Calu3 (cell line): ENCODE measurements at regions of chr12 and their contacts with region 1.

Region 1: GRCh38 chr12:82931349-82932114 is 244.8 kb downstream of the TMTC2 start:
- DNase-seq: no peak
- H3K4me3 Mint-ChIP-seq: no peak overlapping the region
- H3K27ac Mint-ChIP-seq: no peak overlapping the region
- H3K4me1 Mint-ChIP-seq: peaks cover 10% of the 10 kb centered on the region
- H3K27me3 Mint-ChIP-seq: no peaks in the 10 kb centered on the region
- CTCF ChIP-seq: no peak

Region 2: DNA sequence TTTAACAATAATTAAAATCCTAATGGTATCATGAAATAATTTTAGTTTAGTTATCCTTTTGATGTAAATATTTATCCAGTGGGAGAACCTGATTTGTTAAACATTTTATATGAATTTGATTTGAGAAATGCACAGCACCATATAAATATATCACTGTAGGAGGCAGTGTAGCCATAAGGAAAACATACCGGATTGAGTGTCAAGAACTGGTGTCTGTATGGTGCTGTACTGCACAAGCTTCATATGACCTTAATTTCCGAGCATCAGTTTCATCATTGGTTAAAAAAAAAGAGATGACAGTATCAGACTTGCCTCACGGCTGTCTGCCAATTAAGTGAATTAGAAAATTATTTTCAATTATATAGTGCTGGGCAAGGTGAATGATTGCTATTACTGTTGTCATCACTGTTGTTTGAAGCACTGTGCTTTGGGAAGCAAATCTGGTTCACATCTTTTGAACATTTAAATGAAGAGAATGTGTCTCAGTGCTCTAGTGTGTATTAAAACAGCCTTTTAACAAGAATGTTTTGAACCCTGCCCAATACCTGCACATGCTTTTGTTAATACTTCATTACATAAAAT is 172.7 kb before region 1 on chr12:
- CTCF ChIA-PET with region 1: no interaction called
- intact Hi-C with region 1: loop called (anchors 10 kb)
- DNase-seq: no peak
- H3K4me3 Mint-ChIP-seq: no peak overlapping the region
- H3K27ac Mint-ChIP-seq: no peak overlapping the region
- H3K4me1 Mint-ChIP-seq: no peaks in the 10 kb centered on the region
- H3K27me3 Mint-ChIP-seq: no peaks in the 10 kb centered on the region
- CTCF ChIP-seq: no peak

Region 3: DNA sequence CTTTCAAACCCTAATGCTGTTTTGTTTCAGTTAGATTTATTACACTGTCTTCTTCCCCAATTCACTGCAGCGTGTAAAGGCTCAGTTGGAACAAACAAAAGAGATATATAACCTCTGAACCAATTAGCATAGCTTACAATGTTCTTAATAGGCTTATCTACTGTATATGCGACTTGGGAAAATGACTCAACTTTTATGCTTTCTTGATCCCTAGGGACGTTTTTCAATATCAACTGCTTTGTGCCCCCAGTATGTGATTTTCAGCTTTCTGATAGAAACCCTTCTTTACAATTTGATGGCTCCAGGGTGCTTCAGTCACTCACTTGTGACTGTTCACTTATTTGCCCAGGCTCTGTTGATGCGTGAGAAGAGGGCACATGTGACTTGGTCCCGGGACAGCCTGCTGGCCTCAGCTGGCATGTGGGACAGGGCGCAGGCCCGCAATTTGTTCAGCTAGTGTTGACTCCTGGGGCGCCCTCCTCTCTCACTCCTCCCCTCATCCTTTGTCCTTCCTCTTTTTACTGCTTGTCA is 137.7 kb before region 1 on chr12:
- CTCF ChIA-PET with region 1: no interaction called
- intact Hi-C with region 1: no loop called
- DNase-seq: no peak
- H3K4me3 Mint-ChIP-seq: no peak overlapping the region
- H3K27ac Mint-ChIP-seq: no peak overlapping the region
- H3K4me1 Mint-ChIP-seq: no peaks in the 10 kb centered on the region
- H3K27me3 Mint-ChIP-seq: no peaks in the 10 kb centered on the region
- CTCF ChIP-seq: no peak